ENCODE measurements at regions of chr19 and their contacts with region 1.

Region 1: DNA sequence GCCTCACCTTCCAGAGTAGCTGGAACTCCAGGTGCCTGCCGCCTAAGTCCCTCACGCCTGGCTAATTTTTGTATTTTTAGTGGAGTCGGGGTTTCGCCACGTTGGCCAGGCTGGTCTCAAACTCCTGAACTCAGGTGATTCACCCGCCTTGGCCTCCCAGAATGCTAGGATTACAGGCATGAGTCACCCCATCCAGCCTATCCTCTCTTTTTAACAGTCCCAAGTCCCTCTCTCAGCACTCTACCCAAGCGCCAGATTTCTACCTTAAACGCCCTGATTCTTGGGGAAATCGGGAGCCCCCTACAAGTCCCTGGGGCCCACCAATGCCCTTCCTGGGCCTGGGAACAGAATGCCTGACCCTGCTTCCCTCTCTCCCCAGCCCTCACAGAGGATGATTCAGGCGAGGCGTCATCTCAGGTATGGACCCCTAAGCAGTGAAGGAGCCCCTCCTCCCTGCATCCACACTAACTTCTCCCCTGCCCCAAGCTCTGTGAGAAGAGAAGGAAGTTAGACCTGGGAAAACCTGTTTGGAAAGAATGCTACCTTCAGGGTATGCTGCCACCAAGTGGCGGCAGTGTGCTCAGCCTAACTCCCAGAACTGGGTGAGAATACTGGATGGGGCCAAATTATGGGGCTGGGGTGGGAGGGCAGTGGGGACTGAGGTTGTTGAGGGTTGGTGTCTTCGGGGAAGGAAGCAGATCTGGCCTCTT is 20.8 kb upstream of the EBI3 start:
- DNase-seq: no peak
- H3K4me3 Mint-ChIP-seq: no peak overlapping the region
- H3K27ac Mint-ChIP-seq: no peak overlapping the region
- H3K4me1 Mint-ChIP-seq: peaks cover 2% of the 10 kb centered on the region
- H3K27me3 Mint-ChIP-seq: peaks cover 1% of the 10 kb centered on the region

Region 2: GRCh38 chr19:4139614-4140236 is 68.8 kb before region 1 on chr19:
- intact Hi-C with region 1: loop called (anchors 1 kb)
- DNase-seq: peak; percentile 78
- H3K4me3 Mint-ChIP-seq: no peak overlapping the region
- H3K27ac Mint-ChIP-seq: no peak overlapping the region
- H3K4me1 Mint-ChIP-seq: peaks cover 8% of the 10 kb centered on the region
- H3K27me3 Mint-ChIP-seq: peaks cover 8% of the 10 kb centered on the region

Region 3: GRCh38 chr19:4267101-4267900 is 58.8 kb after region 1 on chr19:
- intact Hi-C with region 1: no loop called
- DNase-seq: peak; percentile 49
- H3K4me3 Mint-ChIP-seq: no peak overlapping the region
- H3K27ac Mint-ChIP-seq: peak overlapping the region; percentile 10
- H3K4me1 Mint-ChIP-seq: peaks cover 3% of the 10 kb centered on the region
- H3K27me3 Mint-ChIP-seq: no peaks in the 10 kb centered on the region

Measured in activated T-helper 2 cell treated with anti-CD3 and anti-CD28 coated beads, Interferon-gamma antibody, Interleukin-2, Interleukin-4, amounts not matched to agents 10 μg/mL and 5 μg/mL and 100 μg/mL, durations not matched to agents 14 hours and 24 hours and 36 hours (primary cell).